ENCODE measurements at regions of chr17 and their contacts with region 1.

Region 1: GRCh38 chr17:64025732-64026294 is 5.4 kb upstream of the ICAM2 start:
- DNase-seq: peak; percentile 81 to 87
- ATAC-seq: peak; percentile 93 to 95
- H3K4me3 ChIP-seq: peak overlapping the region; percentile 35
- H3K27ac ChIP-seq: peak overlapping the region in 1 of 2 experiments; percentile 21; a peak in 1 of 6 replicates
- H3K4me1 ChIP-seq: peaks cover 3% of the 10 kb centered on the region; the same call in 1 of the 3 replicates
- CTCF ChIP-seq: peak; percentile 99
- EP300 ChIP-seq: no peak
- POLR2A ChIP-seq: no peak
- RAD21 ChIP-seq: peak; percentile 77 to 80

Region 2: DNA sequence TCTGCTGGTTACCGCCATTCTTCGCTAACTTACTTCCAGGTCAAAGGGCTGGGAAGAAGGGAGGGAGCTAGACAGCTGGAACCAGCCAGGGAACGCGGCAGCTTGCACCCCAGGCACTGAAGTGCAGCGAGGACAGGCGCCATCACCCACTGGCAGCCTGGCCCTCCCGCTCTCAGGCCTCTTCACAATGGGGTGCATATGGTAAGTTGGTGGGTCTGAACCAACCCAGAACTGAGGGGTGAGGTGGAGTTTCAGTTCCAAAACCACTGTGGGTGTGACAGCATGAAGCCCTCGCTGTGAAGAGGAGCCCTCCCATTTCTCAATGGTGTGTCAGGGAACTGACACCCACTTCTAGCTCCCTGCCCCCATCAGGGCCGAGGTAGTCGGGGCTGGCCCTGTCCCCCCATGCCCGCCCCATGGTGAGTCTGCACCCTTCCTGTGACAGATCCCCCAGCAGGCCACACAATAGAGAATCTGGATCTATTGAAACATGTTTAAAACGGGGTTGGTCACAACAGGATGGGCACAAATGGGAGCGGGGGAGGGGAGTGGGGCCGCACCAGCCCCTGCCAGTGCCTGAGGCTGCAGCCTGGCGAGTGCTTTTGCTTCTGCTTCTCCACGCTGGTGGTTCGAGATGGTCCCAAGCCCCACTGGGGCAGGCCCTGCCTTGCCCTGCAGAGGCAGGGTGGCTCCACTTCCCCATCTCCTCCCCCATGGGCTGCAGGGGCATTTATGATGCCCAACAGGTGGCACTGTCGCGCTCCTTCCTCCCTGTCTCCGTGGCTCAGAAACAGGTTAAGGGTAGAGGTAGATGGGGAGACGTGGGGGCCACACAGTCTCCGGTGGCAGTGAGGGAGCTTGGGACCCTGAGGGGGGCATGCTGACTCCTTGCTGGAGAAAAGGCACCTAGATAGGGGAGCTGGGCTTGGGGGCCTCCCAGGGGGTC is 328.2 kb before region 1 on chr17:
- CTCF ChIA-PET with region 1: no interaction called
- POLR2A ChIA-PET with region 1: no interaction called
- DNase-seq: peak; percentile 69 to 78
- ATAC-seq: peak; percentile 31 to 69
- H3K4me3 ChIP-seq: no peak overlapping the region
- H3K27ac ChIP-seq: no peak overlapping the region
- H3K4me1 ChIP-seq: 0 out of 3 replicates have a peak, but pooled peaks cover 6% of the 10 kb centered on the region
- CTCF ChIP-seq: peak; percentile 56
- EP300 ChIP-seq: no peak
- POLR2A ChIP-seq: no peak
- RAD21 ChIP-seq: peak; percentile 31 to 40; a peak in 4 of 5 replicates

Region 3: GRCh38 chr17:63946440-63947367 is 79.1 kb before region 1 on chr17:
- CTCF ChIA-PET with region 1: interaction called, 19 read pairs
- POLR2A ChIA-PET with region 1: interaction called, 3 read pairs
- DNase-seq: peak; percentile 45 to 84
- ATAC-seq: peak; percentile 58 to 88; a peak in 5 of 6 replicates
- H3K4me3 ChIP-seq: no peak overlapping the region
- H3K27ac ChIP-seq: no peak overlapping the region
- H3K4me1 ChIP-seq: no peaks in the 10 kb centered on the region
- CTCF ChIP-seq: peak; percentile 77
- EP300 ChIP-seq: no peak
- POLR2A ChIP-seq: no peak
- RAD21 ChIP-seq: peak; percentile 51 to 57

Region 4: DNA sequence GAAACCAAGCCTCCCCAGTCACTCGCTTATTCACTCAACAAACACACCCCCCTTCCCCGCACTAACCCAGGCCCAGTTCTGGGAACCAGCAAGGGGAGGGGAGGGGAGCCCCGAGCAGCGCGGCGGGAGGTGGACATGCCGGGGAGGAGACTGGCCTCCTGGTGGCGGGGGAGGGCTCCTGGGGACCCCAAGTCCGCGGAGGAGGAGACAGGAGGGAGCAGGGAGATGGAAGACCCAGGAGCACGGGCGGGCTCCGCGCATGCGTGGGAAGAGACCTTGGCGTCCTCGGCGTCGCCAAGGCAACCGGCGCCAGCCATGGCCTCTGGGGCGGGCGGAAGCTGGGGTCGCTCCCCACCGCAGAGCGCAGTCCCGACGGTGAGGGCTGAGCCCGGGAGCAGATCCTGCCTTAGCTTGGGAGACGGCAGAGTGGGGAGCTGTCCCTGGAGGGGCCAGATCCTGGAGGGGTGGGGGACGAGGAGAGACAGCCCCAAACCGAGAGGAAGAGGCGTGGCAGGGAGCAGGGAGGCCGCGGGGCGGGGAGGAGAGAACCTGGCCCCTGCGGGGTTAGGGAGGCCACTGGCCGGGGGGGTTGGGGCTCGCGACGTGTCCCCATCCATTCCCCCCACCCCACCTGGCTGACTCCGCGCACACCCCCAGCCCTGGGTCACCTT is 27.6 kb before region 1 on chr17 and contains the start of gene PRR29:
- CTCF ChIA-PET with region 1: interaction called, 24 read pairs
- POLR2A ChIA-PET with region 1: no interaction called
- DNase-seq: peak; percentile 71 to 95
- ATAC-seq: peak; percentile 75 to 90
- H3K4me3 ChIP-seq: peak within 1 kb of the TSS; percentile 63
- H3K27ac ChIP-seq: peak within 1 kb of the TSS; percentile 52 to 81
- H3K4me1 ChIP-seq: peaks cover 9% of the 10 kb centered on the region
- CTCF ChIP-seq: no peak
- EP300 ChIP-seq: no peak
- POLR2A ChIP-seq: no peak
- RAD21 ChIP-seq: no peak
- polyA plus RNA-seq, gene PRR29: 0.22 and 0.44 TPM in 2 replicates

Region 5: DNA sequence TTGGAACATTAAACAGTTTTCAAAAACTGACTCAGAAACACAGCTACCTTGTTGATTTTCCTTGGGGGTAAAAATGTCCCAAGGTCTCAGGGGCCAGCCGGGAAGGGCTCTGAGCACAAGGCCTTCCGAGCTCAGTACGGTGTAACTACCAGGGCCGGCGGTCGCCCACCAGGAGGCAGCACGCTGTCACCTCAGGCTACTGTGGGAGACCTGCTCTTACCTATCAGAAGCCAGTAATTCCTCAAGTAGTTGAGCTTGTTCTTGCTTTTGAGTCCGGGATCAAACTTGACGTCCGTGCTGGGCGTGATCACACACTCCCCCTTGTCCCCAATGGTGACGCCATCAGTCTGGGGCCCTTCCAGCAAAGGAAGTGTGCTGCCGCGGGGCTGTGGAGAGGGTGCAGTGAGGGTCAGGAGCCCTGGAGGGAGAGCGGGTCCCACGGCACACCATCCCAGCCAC is 38.0 kb after region 1 on chr17:
- CTCF ChIA-PET with region 1: interaction called, 118 read pairs
- POLR2A ChIA-PET with region 1: no interaction called
- DNase-seq: peak; percentile 53 to 68
- ATAC-seq: peak; percentile 75 to 97
- H3K4me3 ChIP-seq: no peak overlapping the region
- H3K27ac ChIP-seq: peak overlapping the region in 1 of 2 experiments; percentile 31; a peak in 1 of 6 replicates
- H3K4me1 ChIP-seq: peaks cover 14% of the 10 kb centered on the region
- CTCF ChIP-seq: peak; percentile 54
- EP300 ChIP-seq: no peak
- POLR2A ChIP-seq: no peak
- RAD21 ChIP-seq: peak; percentile 73 to 79

Region 6: GRCh38 chr17:64103391-64104364 is 77.9 kb after region 1 on chr17:
- CTCF ChIA-PET with region 1: interaction called, 863 read pairs
- POLR2A ChIA-PET with region 1: no interaction called
- DNase-seq: no peak
- ATAC-seq: no peak
- H3K4me3 ChIP-seq: no peak overlapping the region
- H3K27ac ChIP-seq: 0 out of 6 replicates have a peak overlapping the region, but pooled peaks of 1 of the 2 experiments have one; percentile 17
- H3K4me1 ChIP-seq: peaks cover 46% of the 10 kb centered on the region
- CTCF ChIP-seq: no peak
- EP300 ChIP-seq: no peak
- POLR2A ChIP-seq: no peak
- RAD21 ChIP-seq: no peak

Region 7: GRCh38 chr17:64281962-64282727 is 256.3 kb after region 1 on chr17:
- CTCF ChIA-PET with region 1: interaction called, 17 read pairs
- POLR2A ChIA-PET with region 1: no interaction called
- DNase-seq: peak; percentile 68 to 88
- ATAC-seq: peak; percentile 64 to 87; a peak in 5 of 6 replicates
- H3K4me3 ChIP-seq: no peak overlapping the region
- H3K27ac ChIP-seq: peak overlapping the region in 1 of 2 experiments; percentile 27; a peak in 1 of 6 replicates
- H3K4me1 ChIP-seq: no peaks in the 10 kb centered on the region
- CTCF ChIP-seq: peak; percentile 92
- EP300 ChIP-seq: no peak
- POLR2A ChIP-seq: no peak
- RAD21 ChIP-seq: peak; percentile 87 to 94

Region 8: GRCh38 chr17:64386412-64387144 is 360.8 kb after region 1 on chr17:
- CTCF ChIA-PET with region 1: no interaction called
- POLR2A ChIA-PET with region 1: no interaction called
- DNase-seq: no peak
- ATAC-seq: no peak
- H3K4me3 ChIP-seq: no peak overlapping the region
- H3K27ac ChIP-seq: peak overlapping the region in 1 of 2 experiments; percentile 31; a peak in 3 of 6 replicates
- H3K4me1 ChIP-seq: peaks cover 23% of the 10 kb centered on the region
- CTCF ChIP-seq: no peak
- EP300 ChIP-seq: no peak
- POLR2A ChIP-seq: no peak
- RAD21 ChIP-seq: no peak